ENCODE measurements at regions of chr15 and their contacts with region 1.

Region 1: DNA sequence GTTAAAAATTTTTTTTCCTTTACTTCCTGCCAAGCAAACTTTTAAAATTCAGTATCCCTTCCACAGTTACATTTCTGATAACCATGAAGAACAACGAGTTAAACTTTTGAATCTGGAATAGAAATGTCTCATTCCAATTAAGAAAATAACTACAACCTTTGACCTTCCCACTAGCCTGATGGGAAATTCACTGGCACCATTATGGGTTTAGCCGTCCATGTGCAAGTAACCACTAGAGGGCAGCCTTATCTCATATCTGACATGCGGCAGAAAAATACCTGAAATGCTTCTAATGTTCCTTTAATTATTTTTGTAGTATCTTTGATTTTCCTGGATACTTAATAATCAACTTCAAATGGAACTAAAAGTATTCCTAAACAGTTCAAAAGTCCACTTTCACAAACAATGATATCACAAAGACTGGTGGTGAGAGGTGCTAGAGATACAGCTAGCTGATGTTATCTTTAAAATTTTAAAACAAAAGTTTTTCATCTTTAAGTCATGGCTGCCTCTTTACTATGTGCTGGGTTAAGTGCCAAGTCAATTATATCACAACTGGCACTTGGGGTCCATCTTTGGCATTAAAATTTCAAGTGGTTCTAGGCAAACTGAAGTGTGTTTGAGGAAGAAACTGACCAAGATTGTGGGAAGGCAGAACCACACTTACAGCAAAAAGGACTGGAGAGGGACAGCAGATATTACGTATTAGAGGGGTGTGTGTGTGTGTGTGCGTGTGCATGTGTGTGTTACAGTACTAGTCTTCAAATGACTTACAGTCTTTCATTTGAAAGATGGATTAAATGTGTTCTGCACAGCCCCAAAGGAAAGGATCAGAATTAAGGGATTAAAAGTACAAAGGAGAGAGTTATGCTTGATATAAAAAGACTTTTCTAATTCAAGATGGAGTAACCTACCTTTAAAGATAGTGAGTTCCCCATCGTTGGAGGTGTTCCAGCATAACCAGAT is 107.1 kb upstream of the ICE2 start:
- DNase-seq: peak; percentile 66
- H3K4me3 Mint-ChIP-seq: peak overlapping the region; percentile 69
- H3K27ac Mint-ChIP-seq: peak overlapping the region; percentile 96
- H3K4me1 Mint-ChIP-seq: peaks cover 87% of the 10 kb centered on the region
- H3K27me3 Mint-ChIP-seq: no peaks in the 10 kb centered on the region

Region 2: GRCh38 chr15:60507596-60508424 is 78.2 kb before region 1 on chr15:
- CTCF ChIA-PET with region 1: interaction called, 8 read pairs
- POLR2A ChIA-PET with region 1: interaction called, 18 read pairs
- DNase-seq: peak; percentile 61
- H3K4me3 Mint-ChIP-seq: peak overlapping the region; percentile 18
- H3K27ac Mint-ChIP-seq: peak overlapping the region; percentile 67
- H3K4me1 Mint-ChIP-seq: peaks cover 55% of the 10 kb centered on the region
- H3K27me3 Mint-ChIP-seq: no peaks in the 10 kb centered on the region

Region 3: DNA sequence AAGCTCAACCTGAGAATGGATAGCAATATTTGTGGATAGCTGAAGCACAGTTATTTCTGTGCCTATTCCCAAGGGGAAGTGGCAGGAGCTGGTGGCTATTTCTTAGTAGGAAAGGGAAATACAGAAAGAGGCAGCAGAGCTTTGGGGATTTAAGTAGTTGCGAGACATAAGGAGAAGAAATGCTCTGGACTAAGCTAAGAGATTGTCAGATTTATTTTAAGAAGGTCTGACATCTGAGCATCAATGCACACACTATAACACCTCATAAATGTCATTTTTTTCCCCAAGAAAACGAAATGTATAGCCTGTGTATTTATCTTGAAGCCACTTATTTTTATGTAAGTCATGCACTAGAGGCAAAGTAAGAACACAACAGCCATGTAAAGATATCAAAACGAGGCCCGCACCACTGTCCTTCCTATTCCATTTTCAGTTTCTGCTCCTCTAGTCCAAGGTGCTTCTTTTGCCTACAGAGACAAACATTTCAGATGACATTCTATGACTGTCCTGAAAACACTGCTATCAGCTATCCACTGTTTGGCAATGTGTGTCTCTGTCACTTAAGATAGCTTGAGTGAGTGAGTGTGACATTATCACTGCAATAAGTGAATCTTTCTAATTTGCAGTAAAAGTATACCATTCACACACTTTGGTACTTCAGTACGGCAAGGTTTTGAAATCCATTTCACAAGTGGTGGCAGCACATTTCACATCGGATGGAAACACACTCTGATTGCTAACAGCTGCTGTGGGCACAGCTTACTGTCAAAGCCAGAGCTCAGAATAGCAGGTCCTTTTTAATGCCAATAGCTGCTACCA is 44.3 kb before region 1 on chr15:
- CTCF ChIA-PET with region 1: interaction called, 7 read pairs
- POLR2A ChIA-PET with region 1: interaction called, 678 read pairs
- DNase-seq: no peak
- H3K4me3 Mint-ChIP-seq: peak overlapping the region; percentile 43
- H3K27ac Mint-ChIP-seq: peak overlapping the region; percentile 86
- H3K4me1 Mint-ChIP-seq: peaks cover 90% of the 10 kb centered on the region
- H3K27me3 Mint-ChIP-seq: no peaks in the 10 kb centered on the region

Region 4: DNA sequence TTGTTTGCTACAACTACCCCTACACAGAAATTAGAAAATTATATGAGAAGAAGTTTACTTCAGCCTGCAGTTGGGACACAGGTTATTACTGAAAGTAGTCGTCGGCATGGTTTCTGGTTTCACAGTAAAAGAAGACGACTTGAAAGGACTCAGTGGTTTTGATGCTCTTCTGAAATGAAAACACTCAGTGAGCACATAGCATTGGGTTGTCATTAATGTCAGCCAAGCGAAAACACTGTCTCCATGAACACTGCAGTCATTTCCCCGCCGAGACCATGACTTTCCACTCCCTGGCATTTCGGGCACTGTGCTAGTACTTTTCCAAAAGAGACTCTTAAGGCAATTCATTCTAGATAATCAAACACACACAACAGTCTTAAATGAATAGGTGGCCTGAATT is 37.9 kb before region 1 on chr15:
- CTCF ChIA-PET with region 1: interaction called, 50 read pairs
- POLR2A ChIA-PET with region 1: interaction called, 678 read pairs
- DNase-seq: peak; percentile 60
- H3K4me3 Mint-ChIP-seq: peak overlapping the region; percentile 65
- H3K27ac Mint-ChIP-seq: peak overlapping the region; percentile 95
- H3K4me1 Mint-ChIP-seq: peaks cover 96% of the 10 kb centered on the region
- H3K27me3 Mint-ChIP-seq: no peaks in the 10 kb centered on the region

Region 5: GRCh38 chr15:60568301-60568742 is 17.7 kb before region 1 on chr15:
- CTCF ChIA-PET with region 1: interaction called, 34 read pairs
- POLR2A ChIA-PET with region 1: interaction called, 675 read pairs
- DNase-seq: no peak
- H3K4me3 Mint-ChIP-seq: no peak overlapping the region
- H3K27ac Mint-ChIP-seq: peak overlapping the region; percentile 82
- H3K4me1 Mint-ChIP-seq: peaks cover 91% of the 10 kb centered on the region
- H3K27me3 Mint-ChIP-seq: no peaks in the 10 kb centered on the region

Region 6: GRCh38 chr15:60733196-60733595 is 147.2 kb after region 1 on chr15:
- CTCF ChIA-PET with region 1: no interaction called
- POLR2A ChIA-PET with region 1: no interaction called
- DNase-seq: no peak
- H3K4me3 Mint-ChIP-seq: no peak overlapping the region
- H3K27ac Mint-ChIP-seq: no peak overlapping the region
- H3K4me1 Mint-ChIP-seq: peaks cover 10% of the 10 kb centered on the region
- H3K27me3 Mint-ChIP-seq: no peaks in the 10 kb centered on the region

Region 7: GRCh38 chr15:60831540-60831939 is 245.5 kb after region 1 on chr15:
- CTCF ChIA-PET with region 1: no interaction called
- POLR2A ChIA-PET with region 1: no interaction called
- DNase-seq: no peak
- H3K4me3 Mint-ChIP-seq: no peak overlapping the region
- H3K27ac Mint-ChIP-seq: no peak overlapping the region
- H3K4me1 Mint-ChIP-seq: no peaks in the 10 kb centered on the region
- H3K27me3 Mint-ChIP-seq: peaks cover 25% of the 10 kb centered on the region

Region 8: DNA sequence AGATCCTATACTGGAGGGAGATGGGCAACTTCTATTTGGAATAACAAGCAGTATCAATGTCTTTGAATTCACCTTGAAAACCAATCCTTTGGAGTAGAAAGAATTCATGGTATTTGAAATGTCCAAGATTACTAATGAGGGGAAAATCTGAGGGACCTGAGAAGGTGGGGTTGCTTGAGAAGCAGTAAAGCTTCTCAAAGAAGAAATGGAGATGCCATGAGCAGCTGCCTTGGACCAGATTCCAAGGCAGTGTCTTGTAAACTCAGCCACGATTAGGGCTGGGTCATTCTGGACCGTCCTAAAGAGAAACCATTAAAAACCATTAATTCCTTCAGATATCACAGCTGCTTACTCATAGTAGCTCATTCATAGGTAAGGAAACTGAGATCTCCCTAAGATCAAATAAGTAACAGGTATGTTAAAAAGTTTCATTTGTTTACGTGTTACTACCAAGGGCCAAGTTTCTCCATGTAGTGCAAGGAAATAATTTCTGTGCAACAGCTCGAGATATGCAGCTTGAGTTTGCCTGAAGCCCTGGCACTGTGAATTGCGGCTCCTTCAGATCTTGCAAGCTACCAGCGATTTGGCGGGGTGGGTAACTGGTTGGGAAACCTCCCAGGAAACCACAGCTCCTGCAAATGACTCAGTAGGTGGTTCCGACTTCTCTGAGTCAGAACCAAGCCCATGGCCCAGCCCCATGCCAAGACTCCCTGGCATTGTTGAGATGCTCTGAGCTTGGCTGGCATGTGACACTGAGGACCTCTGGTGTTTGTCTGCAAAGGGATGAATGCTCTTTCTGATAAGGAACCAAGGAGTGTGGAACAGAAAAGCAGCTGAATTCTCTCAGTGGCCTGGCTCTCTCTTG is 346.3 kb after region 1 on chr15:
- CTCF ChIA-PET with region 1: interaction called, 58 read pairs
- POLR2A ChIA-PET with region 1: interaction called, 13 read pairs
- DNase-seq: peak; percentile 74
- H3K4me3 Mint-ChIP-seq: no peak overlapping the region
- H3K27ac Mint-ChIP-seq: no peak overlapping the region
- H3K4me1 Mint-ChIP-seq: peaks cover 26% of the 10 kb centered on the region
- H3K27me3 Mint-ChIP-seq: peaks cover 53% of the 10 kb centered on the region